Head of caudate nucleus (tissue), 42 donors: ENCODE measurements at regions of chr11 and their contacts with region 1.

Region 1: GRCh38 chr11:62542750-62543567 is 3.6 kb downstream of the AHNAK start:
- DNase-seq: peak in 40 of 42 donors; percentile 33 to 87 (median 68)

Region 2: DNA sequence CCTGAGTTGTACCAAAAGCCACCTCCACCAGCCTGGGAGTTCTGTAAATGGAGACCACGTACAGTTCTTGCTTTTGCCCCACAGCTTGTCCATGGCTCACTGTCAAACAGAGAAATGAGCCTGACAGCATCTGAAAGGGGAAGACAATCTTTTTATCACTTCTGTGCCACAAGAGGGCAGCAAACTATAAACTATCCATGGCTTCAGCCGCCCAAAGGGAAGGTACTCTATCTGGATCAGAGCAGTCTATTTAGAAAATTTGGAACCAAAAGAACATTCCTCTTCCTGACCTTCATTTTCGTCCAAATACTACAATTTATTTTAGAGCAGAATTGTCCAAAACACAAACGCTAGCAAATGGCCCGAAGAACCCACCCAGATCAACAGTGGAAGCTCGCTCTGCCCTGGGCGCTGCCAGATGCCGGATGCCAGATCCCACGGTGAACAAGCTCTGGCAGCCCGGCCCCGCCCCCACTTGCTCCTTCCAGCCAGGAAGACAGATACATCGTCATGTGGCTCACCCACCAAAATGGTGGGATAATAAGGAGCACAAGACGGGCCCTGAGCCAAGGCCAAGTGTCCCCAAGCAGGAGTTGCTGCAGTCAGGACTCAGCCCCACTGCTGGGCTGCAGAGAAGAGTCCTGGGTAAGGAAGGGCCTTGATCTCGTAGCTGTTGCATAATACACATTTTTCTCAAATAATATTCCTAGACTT is 148.0 kb before region 1 on chr11:
- intact Hi-C with region 1: loop called (anchors 10 kb)
- DNase-seq: peak; percentile 61 to 91 (median 78)

Region 3: GRCh38 chr11:62421996-62422395 is 121.0 kb before region 1 on chr11:
- intact Hi-C with region 1: loop called (anchors 5 kb)
- DNase-seq: no peak

Region 4: GRCh38 chr11:62449451-62449851 is 93.5 kb before region 1 on chr11:
- intact Hi-C with region 1: no loop called
- DNase-seq: no peak

Region 5: GRCh38 chr11:62497132-62497915 is 45.6 kb before region 1 on chr11:
- intact Hi-C with region 1: loop called (anchors 5 kb)
- DNase-seq: peak in 36 of 42 donors; percentile 23 to 83 (median 58)

Region 6: GRCh38 chr11:62645956-62646824 is 103.2 kb after region 1 on chr11 and contains the start of gene GANAB:
- intact Hi-C with region 1: no loop called
- DNase-seq: peak; percentile 98 to 100 (median 99)